HCT116 (cell line): ENCODE measurements at regions of chr20 and their contacts with region 1.

Region 1: GRCh38 chr20:34129518-34130162 is 17.6 kb upstream of the EIF2S2 start:
- DNase-seq: peak; percentile 75
- ATAC-seq: peak; percentile 96
- H3K4me3 ChIP-seq: peak overlapping the region; percentile 30 to 50
- H3K27ac ChIP-seq: no peak overlapping the region
- H3K4me1 ChIP-seq: peaks cover 0 to 7% of the 10 kb centered on the region in 2 experiments; a peak in 2 of 4 replicates
- H3K27me3 ChIP-seq: no peaks in the 10 kb centered on the region
- CTCF ChIP-seq: peak; percentile 71 to 92 (median 83)
- POLR2A ChIP-seq: no peak
- RAD21 ChIP-seq: peak; percentile 95

Region 2: DNA sequence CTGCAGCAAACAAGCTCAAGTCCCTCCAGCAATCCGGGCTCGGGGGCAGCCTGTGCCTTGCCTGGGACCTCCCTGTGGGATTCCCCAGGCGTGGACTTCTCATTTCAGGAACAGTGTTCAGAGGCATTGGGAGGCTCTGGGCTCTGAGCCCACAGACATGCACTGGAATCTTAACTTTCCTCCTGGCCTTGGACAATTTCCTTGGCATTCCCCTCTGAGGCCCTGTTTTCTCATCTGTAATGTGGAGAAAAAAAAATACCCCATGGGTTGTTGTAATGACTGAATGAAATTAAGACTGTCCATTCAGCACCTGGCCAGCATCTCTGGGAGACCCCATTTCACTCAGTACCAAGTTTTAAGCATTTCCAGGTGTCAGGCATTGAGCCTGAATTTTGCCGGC is 1032.6 kb before region 1 on chr20:
- CTCF ChIA-PET with region 1: no interaction called
- POLR2A ChIA-PET with region 1: no interaction called
- RAD21 ChIA-PET with region 1: no interaction called
- intact Hi-C with region 1: loop called (anchors 10 kb)
- DNase-seq: no peak
- ATAC-seq: no peak
- H3K4me3 ChIP-seq: no peak overlapping the region
- H3K27ac ChIP-seq: no peak overlapping the region
- H3K4me1 ChIP-seq: no peaks in the 10 kb centered on the region
- H3K27me3 ChIP-seq: no peaks in the 10 kb centered on the region
- CTCF ChIP-seq: no peak
- POLR2A ChIP-seq: no peak
- RAD21 ChIP-seq: no peak

Region 3: GRCh38 chr20:33450867-33451266 is 678.8 kb before region 1 on chr20:
- CTCF ChIA-PET with region 1: no interaction called
- POLR2A ChIA-PET with region 1: no interaction called
- RAD21 ChIA-PET with region 1: no interaction called
- intact Hi-C with region 1: loop called (anchors 10 kb)
- DNase-seq: peak; percentile 56
- ATAC-seq: peak; percentile 89
- H3K4me3 ChIP-seq: no peak overlapping the region
- H3K27ac ChIP-seq: 0 out of 2 replicates have a peak overlapping the region, but pooled peaks have one; percentile 41
- H3K4me1 ChIP-seq: peaks cover 7 to 33% of the 10 kb centered on the region in 2 experiments
- H3K27me3 ChIP-seq: no peaks in the 10 kb centered on the region
- CTCF ChIP-seq: no peak
- POLR2A ChIP-seq: no peak
- RAD21 ChIP-seq: no peak

Region 4: DNA sequence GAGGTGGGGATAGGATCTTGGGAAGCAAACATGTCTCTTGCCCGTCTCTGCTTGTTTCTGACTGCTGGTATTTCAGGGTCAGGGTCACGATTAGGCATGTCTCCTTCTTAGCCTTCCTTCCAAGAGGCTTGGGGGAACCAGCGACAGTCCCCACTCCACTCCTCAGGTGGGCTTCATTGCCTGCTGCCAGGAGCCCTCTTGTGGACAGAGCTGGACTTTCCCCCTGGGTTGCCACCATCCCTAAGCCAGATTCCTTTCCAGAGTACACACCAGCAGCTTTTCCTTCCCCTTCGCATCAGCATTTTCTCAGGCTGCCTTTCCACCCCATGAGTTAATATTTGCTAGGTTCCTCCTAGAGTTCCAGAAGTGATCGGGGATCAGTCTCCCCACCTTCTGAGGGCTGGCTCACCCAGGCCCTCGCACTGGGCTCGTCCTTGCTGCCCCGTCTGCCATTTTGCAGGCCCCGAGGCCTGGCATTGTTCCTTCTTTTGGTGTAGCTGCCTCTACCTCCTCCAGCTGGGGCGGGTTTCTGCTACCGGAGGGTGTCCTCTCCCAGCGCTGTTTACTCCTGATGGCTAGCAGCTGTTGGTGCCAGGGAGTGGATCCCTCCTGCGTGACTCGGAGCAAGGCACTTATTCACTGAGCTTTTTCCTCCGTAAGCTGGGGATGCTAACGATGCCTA is 476.3 kb before region 1 on chr20:
- CTCF ChIA-PET with region 1: no interaction called
- POLR2A ChIA-PET with region 1: no interaction called
- RAD21 ChIA-PET with region 1: no interaction called
- intact Hi-C with region 1: loop called (anchors 10 kb)
- DNase-seq: peak; percentile 35
- ATAC-seq: peak; percentile 76
- H3K4me3 ChIP-seq: no peak overlapping the region
- H3K27ac ChIP-seq: no peak overlapping the region
- H3K4me1 ChIP-seq: peaks cover 0 to 16% of the 10 kb centered on the region in 2 experiments; a peak in 1 of 4 replicates
- H3K27me3 ChIP-seq: no peaks in the 10 kb centered on the region
- CTCF ChIP-seq: peak; percentile 75 to 92 (median 78)
- POLR2A ChIP-seq: no peak
- RAD21 ChIP-seq: peak; percentile 89

Region 5: GRCh38 chr20:33862709-33863403 is 266.8 kb before region 1 on chr20:
- CTCF ChIA-PET with region 1: no interaction called
- POLR2A ChIA-PET with region 1: no interaction called
- RAD21 ChIA-PET with region 1: no interaction called
- intact Hi-C with region 1: loop called (anchors 1 kb)
- DNase-seq: no peak
- ATAC-seq: peak; percentile 84
- H3K4me3 ChIP-seq: no peak overlapping the region
- H3K27ac ChIP-seq: no peak overlapping the region
- H3K4me1 ChIP-seq: peaks cover 0 to 12% of the 10 kb centered on the region in 2 experiments; a peak in 1 of 4 replicates
- H3K27me3 ChIP-seq: no peaks in the 10 kb centered on the region
- CTCF ChIP-seq: peak; percentile 43 to 95 (median 82); a peak in 5 of 6 replicates
- POLR2A ChIP-seq: no peak
- RAD21 ChIP-seq: peak; percentile 69

Region 6: DNA sequence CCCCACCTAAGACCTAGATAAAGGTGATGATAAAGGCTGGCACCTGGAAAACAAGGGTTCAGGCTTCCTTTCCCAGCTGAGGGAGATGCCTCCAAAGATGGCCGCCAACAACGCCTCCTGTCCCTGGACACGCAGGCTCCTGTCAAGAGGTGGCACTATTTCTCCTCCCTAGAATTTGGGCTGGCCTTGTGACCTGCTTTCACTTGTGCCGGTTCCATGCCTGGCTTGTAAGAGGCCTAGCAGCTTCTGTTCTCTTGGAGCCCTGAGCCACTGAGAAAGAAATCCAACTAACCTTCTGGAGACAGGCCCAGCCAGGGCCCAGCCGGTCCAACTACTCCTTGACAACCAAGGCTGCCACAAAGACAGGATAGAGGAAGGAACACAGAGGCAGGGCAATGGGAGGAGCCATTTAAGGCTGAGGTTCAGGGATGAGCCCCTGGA is 196.2 kb before region 1 on chr20:
- CTCF ChIA-PET with region 1: interaction called, 5 read pairs
- POLR2A ChIA-PET with region 1: no interaction called
- RAD21 ChIA-PET with region 1: no interaction called
- intact Hi-C with region 1: loop called (anchors 1 kb)
- DNase-seq: peak; percentile 48
- ATAC-seq: peak; percentile 94
- H3K4me3 ChIP-seq: no peak overlapping the region
- H3K27ac ChIP-seq: no peak overlapping the region; the same call in 1 of the 2 replicates
- H3K4me1 ChIP-seq: 0 out of 4 replicates have a peak, but pooled peaks cover 0 to 3% of the 10 kb centered on the region in 2 experiments
- H3K27me3 ChIP-seq: no peaks in the 10 kb centered on the region
- CTCF ChIP-seq: peak; percentile 49 to 65 (median 63); a peak in 5 of 6 replicates
- POLR2A ChIP-seq: no peak
- RAD21 ChIP-seq: peak; percentile 72

Region 7: GRCh38 chr20:34190679-34191090 is 61.0 kb after region 1 on chr20:
- CTCF ChIA-PET with region 1: no interaction called
- POLR2A ChIA-PET with region 1: no interaction called
- RAD21 ChIA-PET with region 1: no interaction called
- intact Hi-C with region 1: no loop called
- DNase-seq: peak; percentile 67
- ATAC-seq: peak; percentile 100
- H3K4me3 ChIP-seq: no peak overlapping the region
- H3K27ac ChIP-seq: no peak overlapping the region
- H3K4me1 ChIP-seq: no peaks in the 10 kb centered on the region
- H3K27me3 ChIP-seq: no peaks in the 10 kb centered on the region
- CTCF ChIP-seq: peak; percentile 70 to 95 (median 88); a peak in 5 of 6 replicates
- POLR2A ChIP-seq: no peak
- RAD21 ChIP-seq: peak; percentile 95